A673 (cell line): ENCODE measurements at regions of chrX and their contacts with region 1.

Region 1: DNA sequence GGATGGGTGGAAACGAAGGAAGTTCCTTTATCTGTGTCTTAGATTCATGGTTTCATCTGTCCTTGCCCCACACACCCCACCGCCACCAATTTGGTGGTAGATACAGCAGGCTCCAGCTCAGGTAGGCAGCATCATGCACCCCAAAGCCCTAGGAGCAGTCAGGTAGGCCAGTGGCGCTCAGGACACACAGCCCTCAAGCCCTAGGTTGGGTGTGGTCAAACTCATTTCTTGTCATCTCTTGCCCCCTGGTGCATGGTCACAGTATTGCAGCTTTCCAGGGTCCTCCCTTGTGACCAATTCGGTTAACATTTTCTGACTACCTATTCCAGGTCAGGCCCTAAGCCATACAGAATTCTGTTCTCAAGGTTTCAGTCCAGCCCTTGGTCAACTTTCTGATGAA is 14.5 kb upstream of the PRRG3 start:
- DNase-seq: peak; percentile 58
- H3K4me3 ChIP-seq: no peak overlapping the region
- H3K27ac ChIP-seq: no peak overlapping the region
- H3K4me1 ChIP-seq: no peaks in the 10 kb centered on the region
- H3K27me3 ChIP-seq: peaks cover 8% of the 10 kb centered on the region
- CTCF ChIP-seq: peak; percentile 74

Region 2: GRCh38 chrX:151359931-151360871 is 320.6 kb before region 1 on chrX:
- CTCF ChIA-PET with region 1: no interaction called
- POLR2A ChIA-PET with region 1: no interaction called
- intact Hi-C with region 1: loop called (anchors 10 kb)
- DNase-seq: peak; percentile 41
- H3K4me3 ChIP-seq: no peak overlapping the region
- H3K27ac ChIP-seq: no peak overlapping the region
- H3K4me1 ChIP-seq: no peaks in the 10 kb centered on the region
- H3K27me3 ChIP-seq: peaks cover 7% of the 10 kb centered on the region
- CTCF ChIP-seq: peak; percentile 83

Region 3: DNA sequence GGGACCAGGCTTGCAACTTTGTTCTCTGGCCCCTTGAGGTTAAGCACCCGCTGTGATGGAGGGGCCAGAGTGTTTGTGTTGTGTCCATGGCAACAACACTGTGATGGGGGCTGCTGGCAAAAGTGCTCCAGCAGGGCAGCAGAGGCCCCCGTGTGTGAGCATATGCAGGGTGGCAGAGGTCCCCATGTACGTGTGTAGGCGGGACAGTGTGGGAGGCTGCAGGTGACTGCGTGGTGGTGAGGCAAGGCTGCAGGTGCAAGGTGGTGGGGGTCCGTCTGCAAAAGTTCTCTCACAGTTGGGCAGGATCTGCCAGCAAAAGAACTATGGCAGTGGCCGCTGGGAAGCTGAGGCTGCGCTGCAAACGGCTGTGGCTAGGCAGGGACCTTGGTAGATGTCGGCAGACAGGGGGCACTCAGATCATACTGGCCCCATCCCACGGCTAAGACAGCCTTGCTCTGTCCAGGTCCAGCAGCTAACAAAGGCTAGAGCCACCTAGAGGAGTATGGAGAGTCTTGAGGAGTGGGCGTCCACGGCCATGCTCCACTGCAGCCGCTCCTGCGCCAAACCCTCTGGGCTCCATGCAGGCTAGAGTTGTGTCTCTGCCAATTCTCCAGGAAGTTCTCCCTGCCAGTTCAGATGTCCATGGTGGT is 164.1 kb before region 1 on chrX:
- CTCF ChIA-PET with region 1: no interaction called
- POLR2A ChIA-PET with region 1: no interaction called
- intact Hi-C with region 1: no loop called
- DNase-seq: no peak
- H3K4me3 ChIP-seq: no peak overlapping the region
- H3K27ac ChIP-seq: no peak overlapping the region
- H3K4me1 ChIP-seq: no peaks in the 10 kb centered on the region
- H3K27me3 ChIP-seq: peaks cover 12% of the 10 kb centered on the region
- CTCF ChIP-seq: no peak

Region 4: DNA sequence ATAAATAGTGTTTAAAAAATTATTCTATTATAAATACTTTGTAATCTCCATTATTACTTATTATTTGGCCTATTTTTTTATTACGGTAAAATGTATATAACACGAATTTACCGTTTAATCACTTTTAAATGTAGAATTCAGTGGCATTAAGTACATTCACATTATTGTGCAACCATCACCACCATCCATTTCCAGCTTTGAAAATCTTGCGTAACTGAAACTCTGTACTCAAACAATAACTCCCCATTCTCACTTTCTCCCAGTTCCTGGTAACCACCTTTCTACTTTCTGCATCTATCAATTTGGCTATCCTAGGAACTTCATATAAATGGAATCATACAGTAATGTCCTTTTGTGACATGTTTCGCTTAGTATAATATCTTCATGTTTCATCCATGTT is 71.6 kb before region 1 on chrX:
- CTCF ChIA-PET with region 1: no interaction called
- POLR2A ChIA-PET with region 1: no interaction called
- intact Hi-C with region 1: no loop called
- DNase-seq: no peak
- H3K4me3 ChIP-seq: no peak overlapping the region
- H3K27ac ChIP-seq: no peak overlapping the region
- H3K4me1 ChIP-seq: no peaks in the 10 kb centered on the region
- H3K27me3 ChIP-seq: no peaks in the 10 kb centered on the region
- CTCF ChIP-seq: no peak

Region 5: DNA sequence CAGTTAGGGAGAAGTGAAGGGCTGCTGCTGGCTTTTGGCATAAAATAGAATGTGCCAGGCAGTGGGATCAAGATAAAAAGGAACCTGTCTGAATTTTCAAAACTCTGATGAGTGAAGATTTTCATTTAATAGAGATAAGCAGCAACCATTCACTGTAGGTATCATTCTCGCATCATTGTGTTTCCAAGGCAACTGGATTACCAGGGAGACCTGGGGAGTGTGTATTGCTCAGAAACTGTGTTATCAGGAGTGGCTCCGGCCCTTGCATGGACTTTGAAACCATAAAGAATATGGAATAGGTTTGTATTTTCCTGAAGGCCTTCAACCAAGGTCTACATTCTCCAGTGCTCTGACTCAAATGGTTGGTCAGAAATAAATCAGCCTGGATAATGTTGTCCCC is 208.6 kb after region 1 on chrX:
- CTCF ChIA-PET with region 1: no interaction called
- POLR2A ChIA-PET with region 1: no interaction called
- intact Hi-C with region 1: no loop called
- DNase-seq: no peak
- H3K4me3 ChIP-seq: no peak overlapping the region
- H3K27ac ChIP-seq: no peak overlapping the region
- H3K4me1 ChIP-seq: no peaks in the 10 kb centered on the region
- H3K27me3 ChIP-seq: no peaks in the 10 kb centered on the region
- CTCF ChIP-seq: no peak

Region 6: GRCh38 chrX:153206425-153207046 is 1525.7 kb after region 1 on chrX:
- CTCF ChIA-PET with region 1: no interaction called
- POLR2A ChIA-PET with region 1: no interaction called
- intact Hi-C with region 1: no loop called
- DNase-seq: no peak
- H3K4me3 ChIP-seq: no peak overlapping the region
- H3K27ac ChIP-seq: no peak overlapping the region
- H3K4me1 ChIP-seq: no peaks in the 10 kb centered on the region
- H3K27me3 ChIP-seq: peaks cover 28% of the 10 kb centered on the region
- CTCF ChIP-seq: no peak